Stomach (tissue), 19 donors: ENCODE measurements at regions of chr7 and their contacts with region 1.

Region 1: GRCh38 chr7:22559829-22560489 is 60.0 kb upstream of the STEAP1B start:
- DNase-seq: peak; percentile 63 to 90
- H3K4me3 ChIP-seq: no peak overlapping the region
- H3K27ac ChIP-seq: no peak overlapping the region
- H3K4me1 ChIP-seq: peaks cover 10 to 43% (median 24%) of the 10 kb centered on the region in 4 donors
- H3K27me3 ChIP-seq: peaks cover 0 to 20% (median 6%) of the 10 kb centered on the region in 3 donors
- CTCF ChIP-seq: peak in 5 of 7 experiments; percentile 72 to 93 (median 77)
- EP300 ChIP-seq: no peak
- POLR2A ChIP-seq: no peak

Region 2: GRCh38 chr7:22726345-22727185 is 166.6 kb after region 1 on chr7:
- intact Hi-C with region 1: loop called (anchors 10 kb)
- DNase-seq: peak; percentile 34 to 78
- H3K4me3 ChIP-seq: peak overlapping the region; percentile 19 to 39 (median 34)
- H3K27ac ChIP-seq: peak overlapping the region; percentile 16 to 77 (median 70)
- H3K4me1 ChIP-seq: peaks cover 19 to 64% (median 44%) of the 10 kb centered on the region in 4 donors
- H3K27me3 ChIP-seq: peaks cover 0 to 12% (median 5%) of the 10 kb centered on the region in 3 donors
- CTCF ChIP-seq: peak in 5 of 7 experiments; percentile 11 to 51 (median 28)
- EP300 ChIP-seq: no peak
- POLR2A ChIP-seq: no peak

Region 3: GRCh38 chr7:22782616-22783232 is 222.8 kb after region 1 on chr7:
- intact Hi-C with region 1: loop called (anchors 5 kb)
- DNase-seq: peak; percentile 66 to 72
- H3K4me3 ChIP-seq: no peak overlapping the region
- H3K27ac ChIP-seq: no peak overlapping the region
- H3K4me1 ChIP-seq: peaks cover 0 to 4% (median 0%) of the 10 kb centered on the region in 4 donors
- H3K27me3 ChIP-seq: no peaks in the 10 kb centered on the region
- CTCF ChIP-seq: peak in 5 of 7 experiments; percentile 43 to 62 (median 58)
- EP300 ChIP-seq: no peak
- POLR2A ChIP-seq: no peak

Region 4: GRCh38 chr7:23062452-23062851 is 502.5 kb after region 1 on chr7:
- intact Hi-C with region 1: loop called (anchors 5 kb)
- DNase-seq: no peak
- H3K4me3 ChIP-seq: no peak overlapping the region
- H3K27ac ChIP-seq: no peak overlapping the region
- H3K4me1 ChIP-seq: no peaks in the 10 kb centered on the region
- H3K27me3 ChIP-seq: no peaks in the 10 kb centered on the region
- CTCF ChIP-seq: no peak
- EP300 ChIP-seq: no peak
- POLR2A ChIP-seq: no peak